PC-3 (cell line): ENCODE measurements at regions of chr14 and their contacts with region 1.

Region 1: DNA sequence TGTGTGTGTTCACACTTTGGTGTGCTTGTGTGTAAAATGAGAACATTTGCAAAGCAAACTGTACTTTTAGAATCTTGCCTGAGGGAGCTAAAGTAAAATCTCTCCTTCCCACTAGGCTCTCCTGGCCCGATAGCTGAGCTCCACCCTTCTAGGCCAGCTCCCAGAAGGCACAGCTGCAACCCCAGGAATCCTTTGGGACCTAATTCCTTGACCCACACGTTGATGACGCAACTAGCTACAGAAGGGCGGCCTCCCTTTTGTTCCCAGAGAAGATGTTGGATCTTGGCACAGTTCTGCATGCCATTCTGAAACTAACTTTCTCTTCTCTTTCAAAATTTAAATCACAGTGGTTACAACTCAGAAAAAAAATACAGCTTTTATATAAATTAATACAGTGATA is 268.1 kb downstream of the EGLN3 start:
- DNase-seq: no peak
- ATAC-seq: no peak
- H3K4me3 ChIP-seq: no peak overlapping the region
- H3K27ac ChIP-seq: no peak overlapping the region
- H3K4me1 ChIP-seq: peaks cover 76% of the 10 kb centered on the region
- H3K27me3 ChIP-seq: no peaks in the 10 kb centered on the region
- CTCF ChIP-seq: no peak

Region 2: DNA sequence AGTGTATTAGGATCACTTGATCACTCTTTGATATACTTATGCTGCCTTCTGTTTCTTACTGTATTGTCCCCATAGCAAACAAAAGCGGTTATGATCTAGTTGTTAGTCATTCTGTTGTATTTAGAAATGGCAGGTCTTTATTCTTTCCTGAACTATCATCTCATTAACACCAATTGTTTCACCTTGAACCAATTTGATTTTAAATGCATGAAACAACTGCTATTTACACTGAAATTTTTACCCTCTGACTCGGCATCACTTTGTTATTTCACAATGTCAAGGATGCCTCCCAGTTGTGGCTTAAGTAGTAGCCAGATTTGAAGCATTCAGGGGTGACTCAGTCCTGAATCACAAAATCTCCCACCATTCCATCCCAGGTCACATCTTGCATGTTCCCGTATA is 35.4 kb before region 1 on chr14:
- CTCF ChIA-PET with region 1: no interaction called
- POLR2A ChIA-PET with region 1: no interaction called
- intact Hi-C with region 1: loop called (anchors 1 kb)
- DNase-seq: peak; percentile 96
- ATAC-seq: peak; percentile 82
- H3K4me3 ChIP-seq: no peak overlapping the region; the same call in 1 of the 2 replicates
- H3K27ac ChIP-seq: peak overlapping the region; percentile 83
- H3K4me1 ChIP-seq: peaks cover 41% of the 10 kb centered on the region
- H3K27me3 ChIP-seq: no peaks in the 10 kb centered on the region
- CTCF ChIP-seq: no peak

Region 3: DNA sequence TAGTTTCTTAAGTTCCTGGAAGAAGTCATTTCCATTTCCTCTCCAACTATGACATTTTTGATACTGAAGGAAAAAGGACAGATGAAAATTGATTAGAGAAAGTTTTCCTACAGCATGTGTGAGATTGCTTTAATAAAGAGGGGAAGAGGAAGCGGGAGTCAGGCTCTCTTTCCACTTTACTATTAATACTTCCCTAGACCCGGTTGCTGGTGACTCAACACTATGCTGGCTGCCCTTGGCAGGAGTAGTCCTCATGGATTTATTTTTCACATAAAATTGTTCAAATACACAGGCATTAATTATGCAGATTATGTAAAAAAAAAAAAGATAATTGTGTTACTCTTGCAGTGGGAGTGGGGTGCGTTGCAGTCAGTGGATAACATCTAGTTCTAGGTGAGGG is 25.3 kb before region 1 on chr14:
- CTCF ChIA-PET with region 1: no interaction called
- POLR2A ChIA-PET with region 1: no interaction called
- intact Hi-C with region 1: loop called (anchors 1 kb)
- DNase-seq: peak; percentile 32
- ATAC-seq: peak; percentile 71
- H3K4me3 ChIP-seq: no peak overlapping the region
- H3K27ac ChIP-seq: no peak overlapping the region
- H3K4me1 ChIP-seq: peaks cover 25% of the 10 kb centered on the region
- H3K27me3 ChIP-seq: no peaks in the 10 kb centered on the region
- CTCF ChIP-seq: no peak

Region 4: GRCh38 chr14:33668066-33668465 is 14.7 kb before region 1 on chr14:
- CTCF ChIA-PET with region 1: no interaction called
- POLR2A ChIA-PET with region 1: no interaction called
- intact Hi-C with region 1: loop called (anchors 1 kb)
- DNase-seq: peak; percentile 69
- ATAC-seq: peak; percentile 94
- H3K4me3 ChIP-seq: no peak overlapping the region
- H3K27ac ChIP-seq: 0 out of 2 replicates have a peak overlapping the region, but pooled peaks have one; percentile 13
- H3K4me1 ChIP-seq: peaks cover 25% of the 10 kb centered on the region; the same call in 1 of the 2 replicates
- H3K27me3 ChIP-seq: no peaks in the 10 kb centered on the region
- CTCF ChIP-seq: no peak

Region 5: DNA sequence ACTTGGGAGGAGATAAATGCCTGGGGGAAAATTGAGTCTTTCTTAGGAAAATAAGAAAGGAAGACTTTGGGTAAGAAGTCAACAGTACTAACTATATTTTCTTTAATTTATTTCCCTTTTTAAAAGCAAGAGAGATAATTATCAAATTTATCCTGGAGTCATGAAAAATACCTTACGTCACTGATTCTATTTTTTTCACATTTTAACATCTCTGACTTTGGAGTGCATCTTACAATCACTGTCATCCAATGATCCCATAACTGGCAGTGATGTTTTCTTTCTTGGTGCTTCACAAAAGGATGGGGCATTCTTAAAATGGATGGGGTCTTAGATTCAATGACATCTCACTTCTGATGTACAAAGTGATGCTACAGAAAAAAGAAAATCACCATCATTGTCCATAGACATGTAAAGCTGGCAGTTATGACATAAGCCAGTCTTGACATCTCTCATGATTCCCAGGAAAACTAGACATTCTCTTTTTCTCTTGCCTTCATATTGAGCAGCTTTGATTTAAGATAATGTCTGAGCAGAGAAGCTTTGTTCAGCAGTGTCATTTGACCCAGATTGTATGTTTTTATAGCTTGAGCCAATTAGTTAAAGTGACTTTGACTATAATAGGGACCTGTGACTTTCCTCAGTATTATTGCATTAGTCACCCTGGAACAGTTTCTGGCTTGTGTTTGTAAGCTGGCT is 31.9 kb after region 1 on chr14:
- CTCF ChIA-PET with region 1: no interaction called
- POLR2A ChIA-PET with region 1: interaction called, 3 read pairs
- intact Hi-C with region 1: loop called (anchors 5 kb)
- DNase-seq: peak; percentile 43
- ATAC-seq: peak; percentile 88
- H3K4me3 ChIP-seq: no peak overlapping the region
- H3K27ac ChIP-seq: no peak overlapping the region
- H3K4me1 ChIP-seq: peaks cover 9% of the 10 kb centered on the region
- H3K27me3 ChIP-seq: no peaks in the 10 kb centered on the region
- CTCF ChIP-seq: no peak